Spleen (tissue), 13 donors: ENCODE measurements at regions of chr17 and their contacts with region 1.

Region 1: GRCh38 chr17:51914577-51914976 is 243.9 kb downstream of the CA10 start:
- DNase-seq: no peak
- H3K4me3 ChIP-seq: no peak overlapping the region
- H3K27ac ChIP-seq: no peak overlapping the region
- H3K4me1 ChIP-seq: no peaks in the 10 kb centered on the region
- H3K27me3 ChIP-seq: peaks cover 0 to 2% (median 0%) of the 10 kb centered on the region in 7 donors
- CTCF ChIP-seq: no peak
- POLR2A ChIP-seq: no peak

Region 2: GRCh38 chr17:51748749-51749539 is 165.6 kb before region 1 on chr17:
- intact Hi-C with region 1: no loop called
- DNase-seq: no peak
- H3K4me3 ChIP-seq: no peak overlapping the region
- H3K27ac ChIP-seq: no peak overlapping the region
- H3K4me1 ChIP-seq: no peaks in the 10 kb centered on the region
- H3K27me3 ChIP-seq: no peaks in the 10 kb centered on the region
- CTCF ChIP-seq: no peak
- POLR2A ChIP-seq: no peak

Region 3: GRCh38 chr17:51869387-51869786 is 45.2 kb before region 1 on chr17:
- intact Hi-C with region 1: no loop called
- DNase-seq: no peak
- H3K4me3 ChIP-seq: no peak overlapping the region
- H3K27ac ChIP-seq: no peak overlapping the region
- H3K4me1 ChIP-seq: no peaks in the 10 kb centered on the region
- H3K27me3 ChIP-seq: no peaks in the 10 kb centered on the region
- CTCF ChIP-seq: no peak
- POLR2A ChIP-seq: no peak

Region 4: GRCh38 chr17:51971121-51971520 is 56.5 kb after region 1 on chr17:
- intact Hi-C with region 1: loop called (anchors 10 kb)
- DNase-seq: no peak
- H3K4me3 ChIP-seq: no peak overlapping the region
- H3K27ac ChIP-seq: no peak overlapping the region
- H3K4me1 ChIP-seq: no peaks in the 10 kb centered on the region
- H3K27me3 ChIP-seq: no peaks in the 10 kb centered on the region
- CTCF ChIP-seq: no peak
- POLR2A ChIP-seq: no peak

Region 5: GRCh38 chr17:52899235-52899634 is 984.7 kb after region 1 on chr17:
- intact Hi-C with region 1: no loop called
- DNase-seq: no peak
- H3K4me3 ChIP-seq: no peak overlapping the region
- H3K27ac ChIP-seq: no peak overlapping the region
- H3K4me1 ChIP-seq: no peaks in the 10 kb centered on the region
- H3K27me3 ChIP-seq: no peaks in the 10 kb centered on the region
- CTCF ChIP-seq: no peak
- POLR2A ChIP-seq: no peak